MCF 10A (cell line): ENCODE measurements at regions of chr20 and their contacts with region 1.

Region 1: GRCh38 chr20:59525500-59526241 is 78.7 kb upstream of the PHACTR3 start:
- DNase-seq: peak; percentile 57
- H3K4me3 Mint-ChIP-seq: no peak overlapping the region
- H3K27ac Mint-ChIP-seq: no peak overlapping the region
- H3K4me1 Mint-ChIP-seq: no peaks in the 10 kb centered on the region
- H3K27me3 Mint-ChIP-seq: peaks cover 86% of the 10 kb centered on the region
- CTCF ChIP-seq: peak; percentile 66

Region 2: DNA sequence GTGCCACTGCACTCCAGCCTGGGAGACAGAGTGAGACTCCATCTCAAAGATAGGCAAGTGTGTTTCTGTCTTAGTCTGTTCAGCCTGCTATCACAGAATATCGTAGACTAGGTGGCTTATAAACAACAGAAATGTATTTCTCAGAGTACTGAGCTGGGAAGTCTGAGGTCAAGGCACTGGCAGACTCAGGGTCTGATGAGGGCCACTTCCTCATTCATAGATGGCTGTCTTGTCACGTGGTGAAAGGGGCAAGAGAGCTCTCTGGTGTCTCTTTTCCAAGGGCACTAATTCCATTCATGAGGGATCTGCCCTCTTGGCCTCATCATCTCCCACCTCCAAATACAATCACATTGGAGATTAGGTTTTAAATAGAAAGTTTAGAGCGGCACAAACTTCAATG is 16.9 kb before region 1 on chr20:
- CTCF ChIA-PET with region 1: interaction called, 145 read pairs
- POLR2A ChIA-PET with region 1: no interaction called
- intact Hi-C with region 1: no loop called
- DNase-seq: no peak
- H3K4me3 Mint-ChIP-seq: no peak overlapping the region
- H3K27ac Mint-ChIP-seq: no peak overlapping the region
- H3K4me1 Mint-ChIP-seq: no peaks in the 10 kb centered on the region
- H3K27me3 Mint-ChIP-seq: peaks cover 49% of the 10 kb centered on the region
- CTCF ChIP-seq: no peak

Region 3: GRCh38 chr20:59547596-59547995 is 21.9 kb after region 1 on chr20:
- CTCF ChIA-PET with region 1: interaction called, 17 read pairs
- POLR2A ChIA-PET with region 1: interaction called, 3 read pairs
- intact Hi-C with region 1: no loop called
- DNase-seq: no peak
- H3K4me3 Mint-ChIP-seq: no peak overlapping the region
- H3K27ac Mint-ChIP-seq: no peak overlapping the region
- H3K4me1 Mint-ChIP-seq: no peaks in the 10 kb centered on the region
- H3K27me3 Mint-ChIP-seq: peaks cover 83% of the 10 kb centered on the region
- CTCF ChIP-seq: no peak

Region 4: DNA sequence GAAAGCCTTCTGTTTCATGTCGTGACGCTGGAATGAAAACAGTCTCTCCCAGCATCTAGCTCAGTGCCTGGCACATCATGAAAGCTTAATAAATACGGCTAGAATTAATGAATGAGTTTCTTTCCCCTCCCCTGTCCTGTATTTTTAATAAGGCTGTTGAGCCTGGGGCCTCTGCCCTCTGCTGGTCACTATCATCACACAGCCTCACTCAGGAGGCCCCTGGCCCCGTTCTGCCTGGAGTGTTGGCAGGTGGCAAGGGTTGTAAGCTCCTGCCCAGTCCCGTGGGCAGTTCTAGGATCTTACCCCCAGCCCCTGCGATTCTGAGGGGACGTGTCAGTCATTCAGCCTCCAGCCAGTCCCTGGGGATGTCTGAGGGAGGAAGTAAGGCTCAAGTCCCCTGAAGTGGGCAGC is 120.1 kb after region 1 on chr20:
- CTCF ChIA-PET with region 1: no interaction called
- POLR2A ChIA-PET with region 1: no interaction called
- intact Hi-C with region 1: no loop called
- DNase-seq: no peak
- H3K4me3 Mint-ChIP-seq: no peak overlapping the region
- H3K27ac Mint-ChIP-seq: no peak overlapping the region
- H3K4me1 Mint-ChIP-seq: no peaks in the 10 kb centered on the region
- H3K27me3 Mint-ChIP-seq: peaks cover 90% of the 10 kb centered on the region
- CTCF ChIP-seq: no peak